Activated T-helper 2 cell treated with anti-CD3 and anti-CD28 coated beads, Interferon-gamma antibody, Interleukin-2, Interleukin-4, amounts not matched to agents 10 μg/mL and 5 μg/mL and 100 μg/mL, durations not matched to agents 14 hours and 24 hours and 36 hours (primary cell): ENCODE measurements at regions of chr12 and their contacts with region 1.

Region 1: DNA sequence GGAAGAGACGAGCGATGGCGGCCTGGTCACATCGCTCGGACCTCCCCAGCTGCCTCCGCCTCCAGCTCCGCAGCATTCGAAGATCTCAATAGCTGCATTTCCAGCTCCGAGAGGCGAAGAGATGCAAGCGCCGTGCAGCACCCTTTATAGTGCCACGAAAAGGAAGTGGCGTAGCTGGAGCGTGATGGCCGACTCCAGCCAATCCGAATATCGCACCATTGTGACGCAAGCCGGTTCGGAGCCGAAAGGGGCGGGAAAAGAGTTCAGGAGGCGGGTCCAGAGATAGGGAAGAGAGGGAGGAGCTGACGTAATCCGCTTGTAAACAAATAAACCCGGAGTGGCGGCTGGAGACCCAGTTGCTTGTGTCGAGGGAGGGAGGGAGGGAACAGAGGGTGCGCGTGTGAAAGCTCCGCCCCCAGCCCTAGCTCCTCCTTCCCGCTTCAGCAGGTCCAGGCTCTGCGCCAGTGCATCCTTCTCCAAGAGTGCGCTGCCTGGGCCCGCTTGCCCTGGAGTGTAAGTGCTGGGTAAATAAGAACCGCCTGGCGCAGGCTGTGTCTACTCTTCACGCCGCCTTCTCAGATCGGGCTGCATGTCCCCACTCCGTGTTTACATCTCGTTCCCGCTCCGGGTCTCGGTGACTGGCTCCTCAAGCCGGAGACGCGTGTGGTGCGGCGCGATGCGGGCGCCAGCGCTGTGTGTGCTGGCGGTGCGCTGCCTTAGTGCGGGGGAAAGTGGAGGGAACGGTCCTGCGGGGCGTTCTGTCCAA is at the start of gene BTG1:
- DNase-seq: peak; percentile 100
- H3K4me3 Mint-ChIP-seq: peak within 1 kb of the TSS; percentile 98
- H3K27ac Mint-ChIP-seq: peak within 1 kb of the TSS; percentile 99
- H3K4me1 Mint-ChIP-seq: peaks cover 34% of the 10 kb centered on the region
- H3K27me3 Mint-ChIP-seq: no peaks in the 10 kb centered on the region
- total RNA-seq, gene BTG1: 67.8 and 71.7 TPM in 2 replicates

Region 2: DNA sequence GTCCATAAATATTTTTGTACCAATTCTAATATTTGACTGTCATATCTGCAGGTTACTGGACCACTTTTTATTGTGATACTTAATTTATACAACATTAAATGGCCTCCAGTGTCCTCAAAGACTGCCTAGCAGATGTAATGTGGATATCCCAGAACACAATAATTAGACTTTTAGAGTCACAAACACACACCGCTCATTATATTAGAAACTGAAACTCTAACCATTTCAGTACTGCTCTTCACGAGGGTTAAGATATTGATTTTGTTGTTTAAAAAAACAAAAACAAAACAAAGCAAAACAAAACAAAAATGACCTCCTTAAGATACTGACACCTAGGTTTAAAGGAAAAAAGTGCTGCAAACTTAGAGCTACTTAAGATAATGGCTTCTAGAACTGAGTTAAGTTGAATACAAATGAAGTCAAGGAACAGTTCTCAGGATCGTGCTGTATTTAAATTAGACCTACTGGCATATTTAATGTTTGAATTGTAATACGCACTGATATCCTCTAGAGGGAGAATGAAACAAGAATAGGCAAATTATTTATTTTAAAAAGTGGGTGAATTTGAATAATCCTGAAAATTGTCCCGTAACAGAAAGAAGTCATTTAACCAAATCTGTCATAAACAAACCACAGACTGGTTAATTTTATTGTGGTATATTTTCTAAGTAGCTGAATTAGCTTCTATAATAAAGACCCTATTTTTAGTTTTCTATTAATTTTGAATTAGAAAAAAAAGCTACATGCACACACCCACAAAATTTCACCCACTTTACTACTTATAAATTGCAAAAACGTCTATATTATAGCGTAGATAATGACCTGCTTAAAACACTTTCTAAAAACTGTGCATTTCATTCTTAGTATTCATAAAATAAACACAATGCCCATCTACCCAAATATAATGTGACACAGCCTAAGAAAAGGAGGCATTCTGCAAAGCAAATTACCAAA is 568.1 kb before region 1 on chr12:
- intact Hi-C with region 1: loop called (anchors 5 kb)
- DNase-seq: no peak
- H3K4me3 Mint-ChIP-seq: peak overlapping the region; percentile 38
- H3K27ac Mint-ChIP-seq: no peak overlapping the region
- H3K4me1 Mint-ChIP-seq: peaks cover 9% of the 10 kb centered on the region
- H3K27me3 Mint-ChIP-seq: peaks cover 5% of the 10 kb centered on the region

Region 3: DNA sequence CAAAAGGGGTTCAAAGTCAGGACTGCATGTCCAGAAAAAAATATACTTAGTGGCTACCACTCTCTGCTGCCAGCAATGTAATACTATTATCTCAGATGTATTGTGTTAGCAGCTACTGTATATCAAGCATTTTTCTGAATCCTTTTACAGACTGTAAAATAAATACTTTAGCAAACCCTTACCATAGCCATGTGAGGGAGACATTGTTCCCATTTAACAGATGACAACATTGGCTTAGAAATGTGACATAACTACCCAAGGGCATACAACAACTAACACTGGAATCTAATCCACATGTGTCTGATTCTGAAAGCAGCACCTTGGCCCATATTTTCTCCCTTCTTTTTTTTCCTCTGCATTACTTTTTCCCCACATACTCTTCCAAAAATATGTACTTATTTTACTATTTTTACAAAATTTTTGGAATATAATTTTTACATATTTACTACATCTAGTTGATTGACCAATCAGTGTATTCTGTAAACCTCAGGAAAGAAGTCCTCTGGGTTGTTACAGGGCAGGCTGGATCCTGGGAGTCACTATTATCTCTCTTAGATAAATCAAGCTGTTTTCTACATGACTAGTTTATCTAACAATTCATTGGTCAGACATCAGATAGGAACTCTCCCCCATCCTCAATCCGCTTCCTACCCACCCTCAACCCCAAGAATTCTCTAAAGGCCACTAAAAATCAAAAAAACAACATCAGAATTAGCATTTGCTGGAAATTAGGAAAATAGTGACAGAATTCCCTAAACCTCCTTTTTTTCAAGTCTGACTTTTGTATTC is 154.3 kb before region 1 on chr12:
- intact Hi-C with region 1: loop called (anchors 1 kb)
- DNase-seq: no peak
- H3K4me3 Mint-ChIP-seq: no peak overlapping the region
- H3K27ac Mint-ChIP-seq: no peak overlapping the region
- H3K4me1 Mint-ChIP-seq: peaks cover 4% of the 10 kb centered on the region
- H3K27me3 Mint-ChIP-seq: no peaks in the 10 kb centered on the region

Region 4: DNA sequence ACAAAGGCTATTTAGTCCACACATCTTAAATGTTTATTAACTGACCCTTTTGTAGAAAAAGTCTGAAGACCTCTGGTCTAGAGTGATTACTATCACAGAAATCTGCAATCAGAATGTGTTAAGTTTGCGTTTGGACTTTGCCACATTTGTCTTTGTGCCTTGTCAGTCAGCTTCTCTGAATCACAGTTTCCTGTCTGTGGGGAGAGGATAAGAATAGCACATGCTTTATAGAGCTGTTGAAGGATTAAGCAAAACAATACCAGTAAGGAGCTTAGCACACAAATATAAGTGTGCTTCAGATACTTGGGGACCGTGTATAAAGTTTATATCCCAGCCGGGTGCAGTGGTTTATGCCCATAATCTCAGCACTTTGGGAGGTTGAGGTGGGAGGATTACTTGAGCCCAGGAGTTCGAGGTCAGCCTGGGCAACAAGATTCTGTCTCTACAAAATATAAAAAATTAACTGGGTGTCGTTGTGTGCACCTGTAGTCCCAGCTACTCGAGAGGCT is 62.8 kb after region 1 on chr12:
- intact Hi-C with region 1: loop called (anchors 1 kb)
- DNase-seq: peak; percentile 19
- H3K4me3 Mint-ChIP-seq: peak overlapping the region; percentile 22
- H3K27ac Mint-ChIP-seq: peak overlapping the region; percentile 24
- H3K4me1 Mint-ChIP-seq: peaks cover 37% of the 10 kb centered on the region
- H3K27me3 Mint-ChIP-seq: no peaks in the 10 kb centered on the region

Region 5: DNA sequence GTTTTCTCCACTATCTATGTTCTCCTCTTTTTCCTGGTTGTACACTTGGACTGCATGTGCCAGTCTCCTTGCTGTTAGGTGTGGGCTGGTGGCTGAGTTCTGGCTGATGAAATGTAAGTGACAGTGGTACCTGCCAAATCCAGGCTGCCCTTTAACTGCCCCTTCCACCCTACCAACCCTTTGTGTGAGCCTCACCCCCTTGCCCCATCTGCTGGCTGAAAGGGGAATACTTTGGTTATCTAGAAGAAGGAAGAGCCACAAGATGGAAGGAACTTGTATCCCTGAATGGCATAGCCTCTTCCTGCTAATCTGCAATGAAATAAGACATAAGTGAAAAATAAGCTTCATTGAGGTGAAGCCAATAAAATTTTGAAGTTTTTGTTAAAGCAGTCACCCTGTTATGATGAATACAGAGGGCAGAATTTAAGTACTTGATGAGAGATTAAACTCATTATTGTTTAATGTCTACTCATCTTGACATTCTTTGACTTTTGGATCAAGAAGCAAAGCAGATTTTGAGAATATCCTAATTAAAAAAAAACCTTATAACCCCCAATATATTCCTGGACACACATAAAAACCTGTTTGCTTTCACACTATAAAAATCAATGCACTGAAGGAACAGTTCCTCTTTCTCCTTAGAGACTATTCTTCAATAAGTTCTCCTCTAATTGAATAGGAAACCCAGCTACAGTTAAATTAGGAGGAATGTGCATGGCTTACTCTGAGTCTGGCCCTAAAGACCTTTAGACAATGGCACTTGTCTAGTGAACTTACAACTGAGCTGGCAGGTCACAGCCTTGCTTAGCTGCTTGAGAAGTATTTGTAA is 262.4 kb after region 1 on chr12:
- intact Hi-C with region 1: loop called (anchors 2 kb)
- DNase-seq: peak; percentile 32
- H3K4me3 Mint-ChIP-seq: no peak overlapping the region
- H3K27ac Mint-ChIP-seq: no peak overlapping the region
- H3K4me1 Mint-ChIP-seq: peaks cover 41% of the 10 kb centered on the region
- H3K27me3 Mint-ChIP-seq: no peaks in the 10 kb centered on the region

Region 6: GRCh38 chr12:92551853-92552397 is 406.0 kb after region 1 on chr12:
- intact Hi-C with region 1: loop called (anchors 2 kb)
- DNase-seq: no peak
- H3K4me3 Mint-ChIP-seq: no peak overlapping the region
- H3K27ac Mint-ChIP-seq: no peak overlapping the region
- H3K4me1 Mint-ChIP-seq: peaks cover 32% of the 10 kb centered on the region
- H3K27me3 Mint-ChIP-seq: no peaks in the 10 kb centered on the region

Region 7: GRCh38 chr12:92649511-92650227 is 503.8 kb after region 1 on chr12:
- intact Hi-C with region 1: loop called (anchors 2 kb)
- DNase-seq: peak; percentile 21
- H3K4me3 Mint-ChIP-seq: no peak overlapping the region
- H3K27ac Mint-ChIP-seq: no peak overlapping the region
- H3K4me1 Mint-ChIP-seq: peaks cover 2% of the 10 kb centered on the region
- H3K27me3 Mint-ChIP-seq: peaks cover 15% of the 10 kb centered on the region